Heart left ventricle (tissue), 16 donors: ENCODE measurements at regions of chr5 and their contacts with region 1.

Region 1: GRCh38 chr5:40904205-40904993 is 4.9 kb upstream of the C7 start:
- DNase-seq: peak in 4 of 5 donors; percentile 63 to 67 (median 66)
- ATAC-seq: peak; percentile 93 to 96 (median 95)
- H3K4me3 ChIP-seq: no peak overlapping the region
- H3K27ac ChIP-seq: peak overlapping the region; percentile 23 to 69 (median 50)
- H3K4me1 ChIP-seq: peaks cover 0 to 20% (median 9%) of the 10 kb centered on the region in 12 donors
- H3K27me3 ChIP-seq: no peaks in the 10 kb centered on the region
- CTCF ChIP-seq: peak; percentile 75 to 97 (median 94)
- POLR2A ChIP-seq: no peak

Region 2: GRCh38 chr5:40834849-40835787 is 69.3 kb before region 1 on chr5 and contains the start of gene RPL37:
- intact Hi-C with region 1: no loop called
- DNase-seq: peak; percentile 97 to 98 (median 97)
- ATAC-seq: peak; percentile 99 to 100 (median 100)
- H3K4me3 ChIP-seq: peak within 1 kb of the TSS; percentile 64 to 82 (median 74)
- H3K27ac ChIP-seq: peak within 1 kb of the TSS; percentile 93 to 99 (median 98)
- H3K4me1 ChIP-seq: peaks cover 0 to 40% (median 23%) of the 10 kb centered on the region in 12 donors
- H3K27me3 ChIP-seq: no peaks in the 10 kb centered on the region
- CTCF ChIP-seq: no peak
- POLR2A ChIP-seq: peak in 1 of 2 donors; percentile 75
- total RNA-seq, gene RPL37: 32.7 to 838 (median 595) TPM

Region 3: GRCh38 chr5:40962208-40962955 is 58.0 kb after region 1 on chr5:
- intact Hi-C with region 1: loop called in 1 of 10 experiments (anchors 5 kb)
- DNase-seq: no peak
- ATAC-seq: peak in 2 of 4 donors; percentile 44 to 45
- H3K4me3 ChIP-seq: no peak overlapping the region
- H3K27ac ChIP-seq: no peak overlapping the region
- H3K4me1 ChIP-seq: no peaks in the 10 kb centered on the region
- H3K27me3 ChIP-seq: no peaks in the 10 kb centered on the region
- CTCF ChIP-seq: peak in 4 of 12 donors; percentile 9 to 30 (median 14)
- POLR2A ChIP-seq: no peak

Region 4: DNA sequence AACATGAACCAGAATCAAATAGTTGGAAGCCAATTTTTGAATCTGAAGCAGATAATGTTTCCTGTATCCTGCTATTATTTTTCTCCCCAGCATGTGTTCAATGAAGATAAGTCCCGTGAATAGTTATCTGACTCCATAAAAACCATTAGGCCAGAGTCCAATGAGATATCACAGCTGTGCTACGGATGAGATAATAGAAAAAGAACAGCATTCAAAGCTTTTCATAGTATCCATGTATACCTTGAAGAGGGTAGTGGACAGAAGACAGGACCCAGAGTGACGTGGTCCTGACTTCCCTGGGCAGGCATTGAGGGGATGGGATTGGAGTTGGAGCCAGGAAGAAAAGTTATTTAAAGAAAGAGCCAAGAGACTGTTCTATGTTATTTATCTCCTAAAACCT is 359.6 kb after region 1 on chr5:
- intact Hi-C with region 1: loop called in 6 of 10 experiments (anchors 5 to 10 kb)
- DNase-seq: no peak
- ATAC-seq: peak; percentile 70 to 92 (median 82)
- H3K4me3 ChIP-seq: no peak overlapping the region
- H3K27ac ChIP-seq: peak overlapping the region; percentile 12 to 51 (median 40)
- H3K4me1 ChIP-seq: peaks cover 0 to 23% (median 16%) of the 10 kb centered on the region in 12 donors
- H3K27me3 ChIP-seq: no peaks in the 10 kb centered on the region
- CTCF ChIP-seq: no peak
- POLR2A ChIP-seq: no peak

Region 5: DNA sequence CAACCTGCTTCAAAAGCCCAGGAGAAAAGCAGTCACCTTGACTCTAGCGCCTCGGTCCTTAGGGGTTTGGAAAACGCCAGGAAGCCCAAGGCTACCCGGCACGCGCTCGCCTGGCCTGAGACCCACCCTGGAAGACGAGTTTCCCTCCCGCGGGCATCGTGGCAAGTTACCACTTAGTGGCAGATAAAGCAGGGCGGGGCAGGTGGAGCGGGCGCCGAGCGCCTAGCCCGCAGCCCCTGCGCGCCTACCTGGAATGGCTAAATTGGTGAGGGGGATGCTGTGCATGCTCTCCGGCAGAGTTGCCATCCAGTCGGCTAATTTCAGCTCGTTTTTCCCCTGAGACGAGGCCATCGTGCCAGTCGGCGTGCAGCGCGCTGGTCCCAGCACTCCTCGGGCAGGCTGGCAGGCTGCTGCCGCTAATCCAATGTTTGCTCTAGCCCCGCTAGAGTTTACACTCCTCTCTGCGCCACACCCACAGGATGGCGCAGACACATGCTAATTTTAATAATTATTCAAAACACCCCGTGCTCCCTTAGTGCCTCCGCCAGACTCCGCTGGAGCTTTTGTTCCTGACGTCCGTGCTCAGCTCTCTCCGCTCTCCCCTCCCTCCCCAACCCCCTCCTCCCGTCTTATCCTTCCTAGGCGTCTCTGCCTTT is 605.9 kb after region 1 on chr5 and contains the start of gene PLCXD3:
- intact Hi-C with region 1: loop called in 5 of 10 experiments (anchors 5 to 10 kb)
- DNase-seq: peak; percentile 44 to 73 (median 63)
- ATAC-seq: peak; percentile 92 to 94 (median 94)
- H3K4me3 ChIP-seq: peak within 1 kb of the TSS; percentile 41 to 84 (median 71)
- H3K27ac ChIP-seq: peak within 1 kb of the TSS; percentile 25 to 87 (median 82)
- H3K4me1 ChIP-seq: peaks cover 0 to 25% (median 8%) of the 10 kb centered on the region in 12 donors
- H3K27me3 ChIP-seq: peaks cover 0 to 13% (median 0%) of the 10 kb centered on the region in 9 donors
- CTCF ChIP-seq: no peak
- POLR2A ChIP-seq: peak; percentile 31 to 97
- total RNA-seq, gene PLCXD3: 48.2 to 107 (median 71.6) TPM

Region 6: DNA sequence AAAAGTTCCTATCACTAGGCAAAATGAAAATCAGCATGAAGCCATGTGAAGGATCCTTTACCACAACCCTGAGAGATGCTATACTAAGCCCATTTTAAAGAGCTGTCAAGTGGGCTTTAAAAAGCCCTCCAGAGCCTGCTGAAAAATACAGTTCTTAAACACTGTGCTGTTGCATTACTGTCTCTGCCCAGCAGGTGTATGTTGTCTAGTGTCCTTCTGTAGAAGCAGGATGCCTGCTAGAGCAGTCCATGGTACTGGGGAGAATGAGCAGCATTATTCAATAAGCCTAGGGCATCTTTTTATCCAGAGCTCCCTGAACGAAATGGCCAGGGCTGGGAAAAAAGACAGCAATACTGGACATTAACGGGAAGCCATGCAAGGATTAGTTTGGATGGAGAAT is 732.2 kb after region 1 on chr5:
- intact Hi-C with region 1: loop called in 6 of 10 experiments (anchors 10 kb)
- DNase-seq: no peak
- ATAC-seq: peak in 1 of 4 donors; percentile 45
- H3K4me3 ChIP-seq: no peak overlapping the region
- H3K27ac ChIP-seq: no peak overlapping the region
- H3K4me1 ChIP-seq: no peaks in the 10 kb centered on the region
- H3K27me3 ChIP-seq: no peaks in the 10 kb centered on the region
- CTCF ChIP-seq: peak in 6 of 12 donors; percentile 8 to 37 (median 20)
- POLR2A ChIP-seq: no peak

Region 7: DNA sequence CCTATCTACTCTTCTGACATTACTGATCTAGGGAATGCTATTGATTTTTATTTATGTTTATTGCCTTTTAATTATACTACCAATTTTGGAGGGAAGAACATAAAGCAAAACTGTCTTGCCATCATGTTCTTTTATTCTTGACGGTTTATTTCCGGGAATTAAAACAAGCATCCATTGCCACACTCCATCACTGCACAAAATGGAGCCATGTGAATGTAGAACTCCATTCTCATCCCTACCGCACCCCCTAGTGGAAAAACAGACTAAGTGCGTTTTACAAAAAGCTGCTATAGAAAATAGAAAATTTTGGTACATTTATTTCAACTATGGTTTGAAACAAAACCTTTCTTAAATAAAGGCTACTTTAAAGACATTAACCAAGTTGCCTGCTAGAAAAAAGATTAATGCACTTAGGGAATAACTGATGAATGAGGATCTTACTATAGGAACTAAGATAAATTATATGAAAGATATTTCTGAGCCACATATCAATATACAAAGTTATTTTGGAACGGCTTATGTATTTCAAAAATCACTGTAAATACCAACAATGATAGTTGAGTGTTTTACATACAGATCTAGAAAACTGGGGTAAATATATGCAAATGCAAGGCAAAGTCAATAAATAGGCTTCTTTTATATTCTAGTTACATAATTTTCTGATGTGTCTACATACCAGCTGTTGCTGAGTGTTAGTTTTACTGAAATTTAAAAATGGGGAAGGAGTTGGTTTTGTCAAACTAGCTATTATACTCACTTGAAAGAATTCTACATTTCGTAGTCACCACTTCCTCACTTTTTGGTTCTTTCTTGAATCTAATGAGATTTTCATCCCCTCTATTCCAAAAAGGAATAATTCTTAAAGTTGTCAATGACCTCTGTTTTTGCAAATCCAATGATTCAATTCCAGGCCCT is 939.3 kb after region 1 on chr5:
- intact Hi-C with region 1: loop called in 8 of 10 experiments (anchors 2 to 10 kb)
- DNase-seq: peak in 1 of 5 donors; percentile 28
- ATAC-seq: peak in 3 of 4 donors; percentile 67 to 81 (median 72)
- H3K4me3 ChIP-seq: no peak overlapping the region
- H3K27ac ChIP-seq: no peak overlapping the region
- H3K4me1 ChIP-seq: peaks cover 0 to 20% (median 0%) of the 10 kb centered on the region in 12 donors
- H3K27me3 ChIP-seq: no peaks in the 10 kb centered on the region
- CTCF ChIP-seq: peak; percentile 70 to 86 (median 82)
- POLR2A ChIP-seq: no peak